Heart right ventricle (tissue), 16 donors: ENCODE measurements at regions of chr2 and their contacts with region 1.

Region 1: DNA sequence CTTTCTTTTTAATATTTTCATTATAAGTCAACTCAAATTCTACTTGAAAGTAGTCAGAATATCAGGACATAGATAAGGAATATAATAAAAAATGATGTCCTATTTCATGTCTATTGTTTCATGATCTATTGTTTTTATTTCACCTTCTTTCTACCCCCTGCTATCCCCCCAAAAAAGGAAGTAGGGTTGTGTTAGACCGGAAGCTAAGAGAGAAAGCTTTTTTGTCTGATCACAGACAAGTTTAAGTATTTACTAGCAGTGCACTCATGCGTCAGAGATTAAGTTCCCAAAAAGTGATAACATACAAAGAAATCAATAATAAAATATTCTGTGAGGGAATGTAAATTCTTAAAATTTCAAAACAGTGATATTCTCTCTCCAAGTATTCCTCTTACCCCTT is 447.1 kb upstream of the CNTNAP5 start:
- DNase-seq: no peak
- ATAC-seq: no peak
- H3K4me3 ChIP-seq: no peak overlapping the region
- H3K27ac ChIP-seq: no peak overlapping the region
- H3K4me1 ChIP-seq: no peaks in the 10 kb centered on the region
- H3K27me3 ChIP-seq: no peaks in the 10 kb centered on the region
- CTCF ChIP-seq: no peak

Region 2: DNA sequence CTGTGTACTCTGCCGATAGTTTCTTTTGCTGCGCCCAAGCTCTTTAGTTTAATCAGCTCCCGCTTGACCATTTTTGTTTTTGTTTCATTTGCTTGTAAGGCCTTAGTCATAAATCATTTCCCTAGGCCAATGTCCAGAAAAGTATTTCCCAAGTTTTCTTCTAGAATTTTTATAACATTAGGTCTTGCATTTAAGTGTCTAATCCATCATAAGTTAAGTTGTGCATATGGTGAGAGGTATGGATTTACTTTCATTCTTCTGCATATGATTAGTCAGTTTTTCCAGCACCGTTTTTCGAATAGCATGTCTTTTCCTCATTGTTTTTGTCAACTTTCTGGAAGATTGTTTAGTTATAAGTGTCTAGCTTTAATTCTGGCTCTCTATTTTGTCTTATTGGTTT is 37.7 kb before region 1 on chr2:
- intact Hi-C with region 1: loop called in 1 of 10 experiments (anchors 1 kb)
- DNase-seq: no peak
- ATAC-seq: no peak
- H3K4me3 ChIP-seq: no peak overlapping the region
- H3K27ac ChIP-seq: no peak overlapping the region
- H3K4me1 ChIP-seq: no peaks in the 10 kb centered on the region
- H3K27me3 ChIP-seq: no peaks in the 10 kb centered on the region
- CTCF ChIP-seq: no peak